Pancreas (tissue), 10 donors: ENCODE measurements at regions of chrX and their contacts with region 1.

Region 1: DNA sequence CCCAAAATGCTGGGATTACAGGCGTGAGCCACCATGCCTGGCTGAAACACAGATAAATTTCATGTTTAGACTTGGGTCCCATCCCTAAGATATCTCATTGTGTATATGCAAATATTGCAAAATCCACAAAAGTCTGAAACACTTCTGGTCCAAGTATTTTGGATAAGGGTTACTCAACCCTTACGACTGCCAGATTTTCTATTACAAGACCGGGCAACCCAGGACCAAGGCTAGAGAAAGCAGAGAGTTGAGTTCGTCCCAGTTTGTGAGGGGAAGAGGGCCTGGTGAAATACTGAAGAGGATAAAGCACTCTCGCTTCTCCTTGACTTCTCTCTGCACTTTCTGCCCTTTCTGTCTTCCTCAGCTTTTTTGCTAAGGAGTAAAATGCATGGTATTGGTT is 34.5 kb downstream of the ZFX start:
- DNase-seq: no peak
- ATAC-seq: peak in 1 of 4 donors; percentile 27
- H3K4me3 ChIP-seq: no peak overlapping the region
- H3K27ac ChIP-seq: no peak overlapping the region
- H3K4me1 ChIP-seq: peaks cover 0 to 7% (median 4%) of the 10 kb centered on the region in 3 donors
- H3K27me3 ChIP-seq: no peaks in the 10 kb centered on the region
- CTCF ChIP-seq: no peak

Region 2: GRCh38 chrX:23945206-23945605 is 238.8 kb before region 1 on chrX:
- intact Hi-C with region 1: no loop called
- DNase-seq: no peak
- ATAC-seq: no peak
- H3K4me3 ChIP-seq: no peak overlapping the region
- H3K27ac ChIP-seq: no peak overlapping the region
- H3K4me1 ChIP-seq: no peaks in the 10 kb centered on the region
- H3K27me3 ChIP-seq: peaks cover 0 to 14% (median 0%) of the 10 kb centered on the region in 4 donors
- CTCF ChIP-seq: no peak

Region 3: DNA sequence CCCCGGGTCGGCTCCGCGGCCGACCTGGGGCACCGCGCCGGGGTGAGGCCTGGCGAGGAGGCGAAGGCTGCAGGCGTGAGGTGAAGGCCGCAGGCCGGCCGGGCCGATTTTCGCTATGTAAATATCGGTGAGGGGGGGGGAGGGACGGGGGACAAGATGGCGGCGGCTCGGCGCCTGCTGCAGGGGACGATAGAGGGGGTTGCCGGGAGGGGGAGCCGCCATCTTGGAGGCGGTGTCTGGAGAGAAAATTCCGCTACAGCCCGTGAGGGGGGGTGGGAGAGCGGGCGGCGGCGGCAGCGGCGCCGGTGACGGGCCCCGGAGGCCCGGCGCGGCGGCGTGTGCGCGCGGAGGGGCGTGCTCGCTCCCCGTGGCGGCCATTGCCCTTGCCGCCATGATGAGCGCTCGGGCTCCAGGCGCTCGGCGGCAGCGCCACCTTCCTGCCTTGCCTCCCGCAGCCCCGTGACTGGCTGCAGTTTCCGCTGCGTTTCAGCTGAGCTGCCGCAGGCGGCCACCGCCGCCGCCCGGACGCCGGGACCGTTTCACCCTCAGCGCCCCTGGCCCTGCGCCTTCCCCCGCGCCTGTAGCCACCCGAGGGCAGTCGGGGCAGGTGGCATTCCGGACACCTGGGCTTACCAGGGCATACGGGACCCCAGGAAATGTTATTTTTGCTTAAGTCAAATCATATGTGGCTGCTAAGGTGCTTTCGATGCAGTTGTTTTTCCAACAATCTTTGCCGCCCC is 33.8 kb before region 1 on chrX:
- intact Hi-C with region 1: loop called in 1 of 3 experiments (anchors 2 kb)
- DNase-seq: peak; percentile 85 to 96 (median 94)
- ATAC-seq: peak; percentile 82 to 87 (median 84)
- H3K4me3 ChIP-seq: peak overlapping the region; percentile 60 to 80 (median 66)
- H3K27ac ChIP-seq: peak overlapping the region; percentile 98 to 99 (median 98)
- H3K4me1 ChIP-seq: peaks cover 20 to 70% (median 58%) of the 10 kb centered on the region in 3 donors
- H3K27me3 ChIP-seq: no peaks in the 10 kb centered on the region
- CTCF ChIP-seq: peak in 3 of 4 donors; percentile 17 to 37 (median 22)